ENCODE measurements at regions of chr9 and their contacts with region 1.

Region 1: DNA sequence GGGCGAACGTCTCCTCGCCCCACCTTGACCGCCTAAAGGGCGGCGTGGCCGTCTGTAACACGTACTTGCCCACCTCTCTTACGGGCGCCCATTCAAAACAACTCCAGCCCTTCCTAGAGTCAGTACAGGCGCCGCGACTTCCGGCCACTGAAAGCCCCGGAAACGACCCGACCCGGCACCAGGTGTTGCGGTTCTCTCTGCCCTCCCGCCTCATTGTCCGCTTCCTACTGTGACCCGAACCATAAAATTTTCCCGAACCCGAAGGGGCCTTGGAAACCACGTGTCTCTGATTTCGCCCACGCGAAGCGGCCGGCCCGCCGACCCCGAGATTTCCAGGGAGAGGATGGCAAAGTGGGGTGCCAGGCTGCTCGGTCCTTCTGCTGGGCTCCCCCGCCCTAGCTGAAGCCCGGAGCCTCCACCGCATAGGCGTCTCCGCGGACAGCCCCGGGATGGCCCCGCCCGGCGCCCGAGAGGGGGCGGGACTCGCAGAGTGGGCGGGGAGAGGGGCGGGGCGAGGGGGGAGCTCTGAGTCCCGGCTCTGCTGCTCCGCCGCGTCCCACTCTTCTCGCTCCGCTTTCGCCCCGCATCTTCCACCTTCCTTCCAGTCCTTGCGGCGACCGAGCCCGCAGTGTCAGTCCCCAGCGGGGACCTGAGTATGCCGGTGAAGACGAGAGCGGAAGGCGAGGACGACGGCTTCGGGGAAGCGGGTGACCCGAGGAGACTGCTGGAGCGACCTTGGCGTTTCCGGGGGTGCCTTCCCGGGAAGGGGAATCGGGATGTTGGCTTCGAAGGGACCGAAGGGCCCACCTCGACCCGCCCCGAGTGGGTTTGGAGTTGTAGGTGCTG is 684 bp upstream of the PTGES2 start:
- DNase-seq: peak; percentile 88
- H3K4me3 Mint-ChIP-seq: peak overlapping the region; percentile 96
- H3K27ac Mint-ChIP-seq: peak overlapping the region; percentile 89
- H3K4me1 Mint-ChIP-seq: peaks cover 28% of the 10 kb centered on the region
- H3K27me3 Mint-ChIP-seq: no peaks in the 10 kb centered on the region

Region 2: DNA sequence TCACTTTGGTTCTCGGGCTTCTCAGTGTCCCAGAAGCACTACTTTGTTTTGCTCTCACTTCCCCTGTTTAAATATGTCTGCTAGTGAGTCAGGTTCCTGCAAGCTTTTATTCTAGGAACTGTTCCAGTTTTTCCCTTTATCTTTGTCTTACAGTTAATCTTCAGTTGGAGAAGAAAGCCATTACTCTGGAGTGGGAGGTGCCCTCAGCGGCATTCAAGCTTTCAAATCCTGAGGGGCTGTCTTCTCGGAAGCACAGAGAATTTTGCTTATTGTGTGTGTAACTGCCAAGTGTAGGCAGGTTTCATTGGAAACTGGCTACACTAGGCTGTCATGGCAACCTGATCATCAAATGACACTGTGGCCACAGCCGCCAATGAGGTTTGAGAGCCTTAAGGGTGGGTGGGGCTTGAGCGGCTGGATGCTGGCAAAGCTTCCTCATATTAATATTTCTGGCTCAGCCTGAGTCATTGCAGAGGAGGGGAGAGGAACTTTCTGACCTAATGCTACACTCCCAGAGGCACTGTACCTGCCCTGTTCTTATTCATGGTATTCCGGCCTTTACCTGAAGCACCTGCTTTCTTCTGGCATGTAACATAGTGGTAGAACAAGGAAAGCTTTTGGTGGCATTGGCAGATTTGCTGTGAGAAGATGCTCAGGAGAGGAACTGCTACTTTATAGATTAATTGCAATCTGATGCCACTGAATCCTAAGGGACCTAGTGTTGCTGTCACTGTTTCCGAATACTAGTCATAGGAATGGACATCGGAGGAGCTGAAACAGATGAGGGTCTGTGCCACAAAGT is 33.8 kb before region 1 on chr9:
- CTCF ChIA-PET with region 1: interaction called, 4 read pairs
- POLR2A ChIA-PET with region 1: no interaction called
- intact Hi-C with region 1: loop called (anchors 5 kb)
- DNase-seq: peak; percentile 93
- H3K4me3 Mint-ChIP-seq: peak overlapping the region; percentile 54
- H3K27ac Mint-ChIP-seq: peak overlapping the region; percentile 96
- H3K4me1 Mint-ChIP-seq: peaks cover 84% of the 10 kb centered on the region
- H3K27me3 Mint-ChIP-seq: no peaks in the 10 kb centered on the region

Region 3: GRCh38 chr9:128159784-128160602 is 31.8 kb after region 1 on chr9 and contains the start of gene BBLN:
- CTCF ChIA-PET with region 1: interaction called, 9 read pairs
- POLR2A ChIA-PET with region 1: interaction called, 4 read pairs
- intact Hi-C with region 1: loop called (anchors 1 kb)
- DNase-seq: peak; percentile 97
- H3K4me3 Mint-ChIP-seq: peak within 1 kb of the TSS; percentile 74
- H3K27ac Mint-ChIP-seq: peak within 1 kb of the TSS; percentile 82
- H3K4me1 Mint-ChIP-seq: peaks cover 24% of the 10 kb centered on the region
- H3K27me3 Mint-ChIP-seq: no peaks in the 10 kb centered on the region
- total RNA-seq, gene BBLN: 86.9 to 90.1 TPM

Region 4: GRCh38 chr9:128191406-128192046 is 63.3 kb after region 1 on chr9 and contains the start of gene CIZ1:
- CTCF ChIA-PET with region 1: interaction called, 4 read pairs
- POLR2A ChIA-PET with region 1: no interaction called
- intact Hi-C with region 1: loop called (anchors 5 kb)
- DNase-seq: peak; percentile 76
- H3K4me3 Mint-ChIP-seq: peak within 1 kb of the TSS; percentile 99
- H3K27ac Mint-ChIP-seq: peak within 1 kb of the TSS; percentile 86
- H3K4me1 Mint-ChIP-seq: peaks cover 33% of the 10 kb centered on the region
- H3K27me3 Mint-ChIP-seq: no peaks in the 10 kb centered on the region
- total RNA-seq, gene CIZ1: 95.4 to 105 TPM

Region 5: DNA sequence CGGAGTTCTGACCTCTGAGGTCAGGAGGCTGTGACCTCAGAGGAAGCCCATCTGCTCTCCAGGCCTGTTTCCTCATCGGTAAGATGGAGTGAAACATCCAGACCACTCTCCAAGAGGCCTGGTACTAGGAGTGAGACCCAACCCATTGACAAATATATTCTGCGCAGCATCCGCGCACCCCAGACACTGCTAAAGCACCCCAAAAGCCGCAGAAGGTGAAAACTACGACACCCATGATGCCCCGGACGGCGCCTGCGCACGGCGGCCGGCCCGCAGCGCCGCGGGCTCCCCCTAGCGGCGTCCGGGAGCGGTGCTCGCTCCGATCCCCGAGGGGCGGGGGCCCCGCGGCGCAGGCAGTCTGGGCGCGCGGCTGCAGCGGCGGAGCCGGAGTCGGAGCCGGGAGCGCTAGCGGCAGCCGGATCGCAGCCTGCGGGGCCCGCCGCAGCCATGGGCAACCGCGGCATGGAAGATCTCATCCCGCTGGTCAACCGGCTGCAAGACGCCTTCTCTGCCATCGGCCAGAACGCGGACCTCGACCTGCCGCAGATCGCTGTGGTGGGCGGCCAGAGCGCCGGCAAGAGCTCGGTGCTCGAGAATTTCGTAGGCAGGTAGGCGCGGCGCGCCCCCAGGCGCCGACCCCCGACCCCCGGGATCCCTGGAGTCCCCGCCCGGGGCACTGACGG is 75.0 kb after region 1 on chr9 and contains the start of gene DNM1:
- CTCF ChIA-PET with region 1: no interaction called
- POLR2A ChIA-PET with region 1: no interaction called
- intact Hi-C with region 1: no loop called
- DNase-seq: peak; percentile 75
- H3K4me3 Mint-ChIP-seq: peak within 1 kb of the TSS; percentile 61
- H3K27ac Mint-ChIP-seq: peak within 1 kb of the TSS; percentile 53
- H3K4me1 Mint-ChIP-seq: peaks cover 16% of the 10 kb centered on the region
- H3K27me3 Mint-ChIP-seq: peaks cover 8% of the 10 kb centered on the region
- total RNA-seq, gene DNM1: 0.63 to 1.1 TPM

Region 6: GRCh38 chr9:128455849-128456612 is 327.8 kb after region 1 on chr9 and contains the start of gene ODF2:
- CTCF ChIA-PET with region 1: no interaction called
- POLR2A ChIA-PET with region 1: no interaction called
- intact Hi-C with region 1: loop called (anchors 1 kb)
- DNase-seq: peak; percentile 99
- H3K4me3 Mint-ChIP-seq: peak within 1 kb of the TSS; percentile 85
- H3K27ac Mint-ChIP-seq: peak within 1 kb of the TSS; percentile 81
- H3K4me1 Mint-ChIP-seq: peaks cover 16% of the 10 kb centered on the region
- H3K27me3 Mint-ChIP-seq: no peaks in the 10 kb centered on the region
- total RNA-seq, gene ODF2: 68.9 to 72.8 TPM

Measured in activated CD4-positive, alpha-beta memory T cell treated with anti-CD3 and anti-CD28 coated beads for 36 hours (primary cell).